Tibial artery (tissue), 4 donors: ENCODE measurements at regions of chr2 and their contacts with region 1.

Region 1: GRCh38 chr2:183078465-183079138 is at the start of gene DUSP19:
- DNase-seq: peak; percentile 92 to 96
- H3K4me3 ChIP-seq: peak within 1 kb of the TSS; percentile 63 to 64
- H3K27ac ChIP-seq: peak within 1 kb of the TSS; percentile 84 to 89
- H3K4me1 ChIP-seq: peaks cover 0 to 30% (median 13%) of the 10 kb centered on the region in 4 donors
- H3K27me3 ChIP-seq: no peaks in the 10 kb centered on the region
- CTCF ChIP-seq: no peak

Region 2: GRCh38 chr2:182980115-182980514 is 98.5 kb before region 1 on chr2:
- intact Hi-C with region 1: no loop called
- DNase-seq: no peak
- H3K4me3 ChIP-seq: no peak overlapping the region
- H3K27ac ChIP-seq: no peak overlapping the region
- H3K4me1 ChIP-seq: peaks cover 0 to 8% (median 2%) of the 10 kb centered on the region in 4 donors
- H3K27me3 ChIP-seq: no peaks in the 10 kb centered on the region
- CTCF ChIP-seq: peak; percentile 52 to 62

Region 3: GRCh38 chr2:183019718-183020442 is 58.7 kb before region 1 on chr2:
- intact Hi-C with region 1: no loop called
- DNase-seq: no peak
- H3K4me3 ChIP-seq: no peak overlapping the region
- H3K27ac ChIP-seq: no peak overlapping the region
- H3K4me1 ChIP-seq: peaks cover 0 to 94% (median 18%) of the 10 kb centered on the region in 4 donors
- H3K27me3 ChIP-seq: no peaks in the 10 kb centered on the region
- CTCF ChIP-seq: no peak

Region 4: DNA sequence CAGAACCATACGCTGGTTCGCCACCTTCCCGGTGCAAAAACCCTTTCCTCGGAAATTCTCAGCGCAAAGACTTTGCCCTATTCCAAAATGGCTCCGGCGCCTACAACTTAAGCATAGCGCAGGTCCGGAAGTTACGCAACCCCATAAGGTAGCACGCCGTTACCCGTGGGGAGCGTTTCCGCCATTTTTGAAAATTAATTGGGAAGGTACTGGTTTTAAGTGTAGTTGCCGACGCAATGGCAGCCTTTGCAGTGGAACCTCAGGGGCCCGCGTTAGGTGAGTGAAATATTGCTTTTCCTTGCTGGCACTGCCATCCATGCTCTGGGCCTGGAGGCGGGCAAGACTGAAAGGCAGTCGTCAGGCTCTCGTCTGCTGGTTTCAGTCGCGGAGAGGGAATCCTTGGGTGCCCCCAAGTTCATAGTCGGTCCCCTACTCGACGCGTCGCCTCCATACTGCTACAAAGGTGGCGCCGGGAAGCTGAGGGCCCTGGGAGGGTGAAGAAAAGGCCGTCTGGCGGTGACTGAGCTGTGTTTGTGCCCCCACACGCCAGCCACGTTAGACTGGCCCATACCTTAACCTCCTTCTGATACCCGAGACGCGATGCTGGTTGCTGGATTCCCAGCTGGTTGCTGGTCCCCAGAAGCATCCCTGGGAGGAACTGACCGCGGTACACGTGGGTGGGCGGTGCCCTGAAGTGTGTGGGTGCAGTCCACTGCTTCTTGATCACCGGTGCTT is 45.8 kb after region 1 on chr2 and contains the start of gene NUP35:
- intact Hi-C with region 1: loop called (anchors 10 kb)
- DNase-seq: peak; percentile 87 to 90
- H3K4me3 ChIP-seq: peak within 1 kb of the TSS; percentile 69 to 82
- H3K27ac ChIP-seq: peak within 1 kb of the TSS; percentile 72 to 80
- H3K4me1 ChIP-seq: peaks cover 0 to 19% (median 9%) of the 10 kb centered on the region in 4 donors
- H3K27me3 ChIP-seq: no peaks in the 10 kb centered on the region
- CTCF ChIP-seq: no peak

Region 5: DNA sequence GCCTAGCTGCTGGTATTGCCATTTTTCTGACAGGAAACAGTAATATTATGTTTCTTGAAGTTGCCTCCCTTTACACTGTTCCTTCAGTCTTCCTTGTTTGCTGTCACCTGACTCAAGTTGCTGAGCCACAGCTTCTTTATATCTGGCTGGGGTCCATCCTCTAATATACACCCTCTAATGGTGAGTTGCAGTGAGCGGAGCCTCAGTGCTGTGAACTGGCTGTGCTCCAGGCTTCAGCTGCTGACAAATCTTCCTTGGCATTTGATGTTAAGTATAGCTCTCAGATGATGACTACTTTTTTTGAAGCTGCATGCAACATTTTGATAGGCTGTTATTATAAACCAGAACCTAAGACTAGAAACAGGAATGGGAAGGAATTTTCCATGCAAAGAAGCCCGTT is 412.3 kb after region 1 on chr2:
- intact Hi-C with region 1: no loop called
- DNase-seq: no peak
- H3K4me3 ChIP-seq: no peak overlapping the region
- H3K27ac ChIP-seq: no peak overlapping the region
- H3K4me1 ChIP-seq: peaks cover 0 to 10% (median 2%) of the 10 kb centered on the region in 4 donors
- H3K27me3 ChIP-seq: no peaks in the 10 kb centered on the region
- CTCF ChIP-seq: no peak